GM12878 (cell line): ENCODE measurements at regions of chr11 and their contacts with region 1.

Region 1: GRCh38 chr11:82038153-82038552 is 695.5 kb downstream of the FAM181B start:
- DNase-seq: no peak
- ATAC-seq: no peak
- H3K4me3 ChIP-seq: no peak overlapping the region
- H3K27ac ChIP-seq: no peak overlapping the region
- H3K4me1 ChIP-seq: no peaks in the 10 kb centered on the region
- H3K27me3 ChIP-seq: no peaks in the 10 kb centered on the region
- CTCF ChIP-seq: peak in 2 of 3 experiments; percentile 16 to 33; a peak in 3 of 6 replicates
- EP300 ChIP-seq: no peak
- POLR2A ChIP-seq: no peak
- RAD21 ChIP-seq: peak; percentile 34; the same call in 1 of the 2 replicates

Region 2: DNA sequence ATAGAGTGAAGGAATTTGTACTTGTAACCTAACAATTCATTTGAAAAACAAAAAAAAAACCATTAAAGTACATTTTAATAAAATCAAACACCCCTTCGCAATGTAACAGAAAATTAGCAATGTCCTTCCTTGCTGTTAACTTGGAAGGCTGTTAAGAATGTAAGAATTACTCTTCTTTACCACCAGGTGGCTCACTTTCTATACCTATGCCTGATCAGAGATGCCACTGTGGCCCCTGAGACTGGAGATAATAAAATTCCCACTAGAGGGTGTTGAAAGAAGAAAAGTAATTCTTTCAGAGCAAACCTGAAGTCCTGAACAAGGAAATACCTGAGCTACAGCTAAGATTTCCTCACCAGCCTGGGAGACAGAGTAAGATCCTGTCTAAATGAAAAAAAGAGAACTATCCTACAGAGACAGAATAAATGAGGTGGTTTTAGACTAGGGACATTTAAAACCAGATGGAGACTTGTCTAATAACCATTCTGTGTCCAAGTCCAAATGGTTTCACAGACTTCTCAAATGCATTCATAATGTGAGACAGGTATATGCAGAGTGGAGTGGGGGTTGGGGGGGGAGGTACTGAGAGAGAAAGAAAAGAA is 393.8 kb before region 1 on chr11:
- CTCF ChIA-PET with region 1: interaction called, 3 read pairs
- POLR2A ChIA-PET with region 1: no interaction called
- RAD21 ChIA-PET with region 1: no interaction called
- SMC1A ChIA-PET with region 1: no interaction called
- in situ Hi-C with region 1: no loop called
- intact Hi-C with region 1: loop called (anchors 10 kb)
- DNase-seq: no peak
- ATAC-seq: peak; percentile 90
- H3K4me3 ChIP-seq: no peak overlapping the region
- H3K27ac ChIP-seq: no peak overlapping the region
- H3K4me1 ChIP-seq: no peaks in the 10 kb centered on the region
- H3K27me3 ChIP-seq: no peaks in the 10 kb centered on the region
- CTCF ChIP-seq: peak; percentile 49 to 58 (median 55); a peak in 5 of 6 replicates
- EP300 ChIP-seq: no peak
- POLR2A ChIP-seq: no peak
- RAD21 ChIP-seq: peak; percentile 69

Region 3: DNA sequence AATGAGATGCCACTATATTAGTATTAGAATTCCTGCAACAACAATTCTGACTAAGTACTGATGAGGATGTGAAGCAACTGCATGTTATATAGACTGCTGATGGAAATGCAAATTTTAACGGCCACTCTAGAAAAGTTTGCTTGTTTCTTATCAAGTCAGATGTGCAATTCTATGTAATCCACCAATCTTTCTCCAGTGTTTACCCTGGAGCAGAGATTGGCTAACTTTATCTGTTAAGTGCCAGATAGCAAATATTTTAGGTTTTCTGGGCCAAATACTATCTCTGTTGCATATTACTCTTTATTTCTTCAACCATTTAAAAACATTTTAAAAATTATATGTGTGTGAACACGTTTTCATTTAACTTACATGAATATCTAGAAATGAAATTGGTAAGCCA is 108.6 kb after region 1 on chr11:
- CTCF ChIA-PET with region 1: no interaction called
- POLR2A ChIA-PET with region 1: no interaction called
- RAD21 ChIA-PET with region 1: no interaction called
- SMC1A ChIA-PET with region 1: no interaction called
- in situ Hi-C with region 1: no loop called
- intact Hi-C with region 1: no loop called
- DNase-seq: no peak
- ATAC-seq: no peak
- H3K4me3 ChIP-seq: no peak overlapping the region
- H3K27ac ChIP-seq: no peak overlapping the region
- H3K4me1 ChIP-seq: no peaks in the 10 kb centered on the region
- H3K27me3 ChIP-seq: no peaks in the 10 kb centered on the region
- CTCF ChIP-seq: no peak
- EP300 ChIP-seq: no peak
- POLR2A ChIP-seq: no peak
- RAD21 ChIP-seq: no peak